ENCODE measurements at regions of chr18 and their contacts with region 1.

Region 1: GRCh38 chr18:9608298-9608697 is 6.1 kb downstream of the PPP4R1 start:
- DNase-seq: no peak
- ATAC-seq: no peak
- H3K4me3 ChIP-seq: no peak overlapping the region
- H3K27ac ChIP-seq: no peak overlapping the region
- H3K4me1 ChIP-seq: peaks cover 17% of the 10 kb centered on the region
- H3K27me3 ChIP-seq: no peaks in the 10 kb centered on the region
- CTCF ChIP-seq: no peak
- EP300 ChIP-seq: no peak
- POLR2A ChIP-seq: no peak
- RAD21 ChIP-seq: no peak

Region 2: DNA sequence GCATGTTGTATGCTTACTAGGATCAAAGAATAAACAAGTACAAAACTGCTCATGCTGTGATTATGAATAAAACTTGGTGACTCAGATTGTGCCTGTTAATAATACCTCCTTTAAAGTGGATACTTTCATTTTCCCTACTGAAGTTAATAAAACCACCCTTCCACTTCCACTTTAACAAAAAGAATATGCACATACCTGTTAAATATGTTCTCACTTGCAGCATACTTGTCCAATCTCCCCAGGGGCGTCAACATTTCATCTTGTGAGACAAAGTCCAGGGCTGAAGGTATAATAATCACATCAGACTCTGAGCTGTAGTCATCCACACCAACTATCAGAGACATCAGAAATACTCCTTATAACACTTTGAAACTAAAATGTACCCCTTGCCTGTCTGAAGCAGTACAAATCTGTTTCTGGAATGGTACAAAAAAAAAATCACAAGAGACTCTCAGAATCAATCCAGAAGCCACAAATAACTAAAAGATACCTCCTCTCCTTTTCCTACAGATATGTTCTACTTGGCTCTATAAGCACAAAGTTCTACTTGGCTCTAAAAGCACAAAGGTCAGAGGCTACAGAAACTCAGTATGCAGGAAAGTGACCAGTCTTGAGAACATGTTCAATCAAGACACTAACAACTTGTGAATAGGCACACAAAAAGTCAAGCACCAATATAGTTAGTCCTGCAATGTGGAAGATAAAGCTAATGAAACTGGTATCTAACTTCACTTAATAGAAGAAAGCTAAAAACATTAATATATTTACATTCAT is 13.3 kb before region 1 on chr18:
- CTCF ChIA-PET with region 1: interaction called, 16 read pairs
- POLR2A ChIA-PET with region 1: no interaction called
- RAD21 ChIA-PET with region 1: interaction called, 3 read pairs
- SMC1A ChIA-PET with region 1: interaction called, 11 read pairs
- in situ Hi-C with region 1: no loop called
- intact Hi-C with region 1: no loop called
- DNase-seq: no peak
- ATAC-seq: peak; percentile 86
- H3K4me3 ChIP-seq: peak overlapping the region; percentile 18; the same call in 1 of the 2 replicates
- H3K27ac ChIP-seq: peak overlapping the region; percentile 58
- H3K4me1 ChIP-seq: peaks cover 14% of the 10 kb centered on the region
- H3K27me3 ChIP-seq: no peaks in the 10 kb centered on the region
- CTCF ChIP-seq: no peak
- EP300 ChIP-seq: no peak
- POLR2A ChIP-seq: no peak
- RAD21 ChIP-seq: no peak

Region 3: GRCh38 chr18:9643549-9643948 is 35.3 kb after region 1 on chr18:
- CTCF ChIA-PET with region 1: no interaction called
- POLR2A ChIA-PET with region 1: no interaction called
- RAD21 ChIA-PET with region 1: no interaction called
- SMC1A ChIA-PET with region 1: no interaction called
- in situ Hi-C with region 1: no loop called
- intact Hi-C with region 1: no loop called
- DNase-seq: no peak
- ATAC-seq: no peak
- H3K4me3 ChIP-seq: no peak overlapping the region
- H3K27ac ChIP-seq: no peak overlapping the region
- H3K4me1 ChIP-seq: peaks cover 5% of the 10 kb centered on the region; the same call in 1 of the 2 replicates
- H3K27me3 ChIP-seq: no peaks in the 10 kb centered on the region; a peak in 1 of 4 replicates
- CTCF ChIP-seq: no peak
- EP300 ChIP-seq: no peak
- POLR2A ChIP-seq: no peak
- RAD21 ChIP-seq: no peak

Measured in GM12878 (cell line).